B cell (primary cell): ENCODE measurements at regions of chr4 and their contacts with region 1.

Region 1: DNA sequence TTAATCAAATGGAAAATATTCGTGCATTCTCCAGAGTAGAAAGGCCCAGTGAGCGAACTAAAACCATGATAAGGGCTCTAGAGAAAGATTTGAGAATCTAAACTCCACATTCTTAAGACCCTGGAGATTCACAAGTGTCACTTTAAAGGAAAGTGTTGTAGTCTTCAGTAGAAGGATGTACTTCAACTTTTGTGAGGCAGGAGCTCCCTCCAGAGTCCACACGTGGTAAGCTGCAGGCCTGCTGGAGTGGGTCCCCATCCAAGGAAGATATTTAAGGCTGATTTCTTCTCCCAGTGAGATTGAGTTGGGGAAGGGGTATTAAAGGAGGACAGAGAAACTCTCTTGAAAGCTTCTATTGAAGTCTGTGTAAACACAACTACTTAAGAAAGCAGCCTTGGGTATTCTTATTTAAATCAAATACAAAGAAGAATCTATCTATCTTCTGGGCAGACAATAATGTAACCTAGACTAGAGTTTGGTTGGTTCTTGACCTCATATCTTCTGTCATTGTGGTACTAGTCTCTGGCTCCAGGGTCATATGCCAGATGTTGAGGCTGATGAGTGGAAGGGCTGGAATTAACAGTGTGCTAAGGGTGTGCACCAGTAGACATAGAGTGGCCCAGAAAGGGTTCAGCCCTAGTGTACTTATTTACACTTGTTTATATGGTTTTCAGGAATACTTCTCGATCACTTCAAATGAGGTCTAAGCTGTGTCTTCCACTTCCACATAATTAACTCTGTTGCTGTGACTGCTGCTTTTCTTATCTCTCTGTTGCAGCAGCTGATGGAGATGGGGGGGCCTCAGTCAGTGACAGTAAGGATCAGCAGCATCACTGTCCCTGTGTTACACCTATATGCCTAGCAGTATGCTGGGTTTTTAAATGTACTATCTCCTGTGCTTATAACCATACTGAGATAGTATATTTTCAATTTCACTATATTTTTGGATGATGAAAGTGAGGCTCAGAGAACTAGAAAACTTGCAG is 76.1 kb downstream of the HMGB2 start:
- DNase-seq: peak; percentile 66
- ATAC-seq: peak; percentile 73
- H3K4me3 ChIP-seq: no peak overlapping the region
- H3K4me3 Mint-ChIP-seq: no peak overlapping the region
- H3K27ac ChIP-seq: no peak overlapping the region
- H3K27ac Mint-ChIP-seq: no peak overlapping the region
- H3K4me1 ChIP-seq: peaks cover 8 to 11% of the 10 kb centered on the region in 2 donors
- H3K4me1 Mint-ChIP-seq: peaks cover 33% of the 10 kb centered on the region
- H3K27me3 ChIP-seq: no peaks in the 10 kb centered on the region
- H3K27me3 Mint-ChIP-seq: no peaks in the 10 kb centered on the region
- CTCF ChIP-seq: peak; percentile 81

Region 2: GRCh38 chr4:172546782-172547181 is 711.2 kb before region 1 on chr4:
- CTCF ChIA-PET with region 1: no interaction called
- POLR2A ChIA-PET with region 1: no interaction called
- intact Hi-C with region 1: no loop called
- DNase-seq: no peak
- ATAC-seq: no peak
- H3K4me3 ChIP-seq: no peak overlapping the region
- H3K4me3 Mint-ChIP-seq: no peak overlapping the region
- H3K27ac ChIP-seq: no peak overlapping the region
- H3K27ac Mint-ChIP-seq: no peak overlapping the region
- H3K4me1 ChIP-seq: no peaks in the 10 kb centered on the region
- H3K4me1 Mint-ChIP-seq: no peaks in the 10 kb centered on the region
- H3K27me3 ChIP-seq: no peaks in the 10 kb centered on the region
- H3K27me3 Mint-ChIP-seq: no peaks in the 10 kb centered on the region
- CTCF ChIP-seq: no peak

Region 3: GRCh38 chr4:173005912-173006633 is 252.0 kb before region 1 on chr4:
- CTCF ChIA-PET with region 1: interaction called, 181 read pairs
- POLR2A ChIA-PET with region 1: no interaction called
- intact Hi-C with region 1: no loop called
- DNase-seq: no peak
- ATAC-seq: no peak
- H3K4me3 ChIP-seq: no peak overlapping the region
- H3K4me3 Mint-ChIP-seq: no peak overlapping the region
- H3K27ac ChIP-seq: no peak overlapping the region
- H3K27ac Mint-ChIP-seq: no peak overlapping the region
- H3K4me1 ChIP-seq: no peaks in the 10 kb centered on the region
- H3K4me1 Mint-ChIP-seq: no peaks in the 10 kb centered on the region
- H3K27me3 ChIP-seq: no peaks in the 10 kb centered on the region
- H3K27me3 Mint-ChIP-seq: no peaks in the 10 kb centered on the region
- CTCF ChIP-seq: no peak

Region 4: GRCh38 chr4:173025131-173025530 is 232.9 kb before region 1 on chr4:
- CTCF ChIA-PET with region 1: interaction called, 68 read pairs
- POLR2A ChIA-PET with region 1: no interaction called
- intact Hi-C with region 1: loop called (anchors 1 kb)
- DNase-seq: peak; percentile 51
- ATAC-seq: peak; percentile 31
- H3K4me3 ChIP-seq: no peak overlapping the region
- H3K4me3 Mint-ChIP-seq: no peak overlapping the region
- H3K27ac ChIP-seq: no peak overlapping the region
- H3K27ac Mint-ChIP-seq: no peak overlapping the region
- H3K4me1 ChIP-seq: no peaks in the 10 kb centered on the region
- H3K4me1 Mint-ChIP-seq: no peaks in the 10 kb centered on the region
- H3K27me3 ChIP-seq: no peaks in the 10 kb centered on the region
- H3K27me3 Mint-ChIP-seq: peaks cover 2% of the 10 kb centered on the region
- CTCF ChIP-seq: peak; percentile 64

Region 5: GRCh38 chr4:173168396-173169177 is 89.4 kb before region 1 on chr4 and contains the start of gene GALNT7:
- CTCF ChIA-PET with region 1: interaction called, 3 read pairs
- POLR2A ChIA-PET with region 1: no interaction called
- intact Hi-C with region 1: loop called (anchors 5 kb)
- DNase-seq: peak; percentile 75
- ATAC-seq: peak; percentile 43
- H3K4me3 ChIP-seq: peak within 1 kb of the TSS; percentile 71 to 93 (median 74)
- H3K4me3 Mint-ChIP-seq: peak within 1 kb of the TSS; percentile 97
- H3K27ac ChIP-seq: peak within 1 kb of the TSS; percentile 65 to 85
- H3K27ac Mint-ChIP-seq: peak within 1 kb of the TSS; percentile 95
- H3K4me1 ChIP-seq: peaks cover 26 to 34% of the 10 kb centered on the region in 2 donors
- H3K4me1 Mint-ChIP-seq: peaks cover 40% of the 10 kb centered on the region
- H3K27me3 ChIP-seq: no peaks in the 10 kb centered on the region
- H3K27me3 Mint-ChIP-seq: no peaks in the 10 kb centered on the region
- CTCF ChIP-seq: no peak
- total RNA-seq, gene GALNT7: 23.7 and 26.8 TPM in 2 replicates

Region 6: GRCh38 chr4:173192375-173193162 is 65.5 kb before region 1 on chr4:
- CTCF ChIA-PET with region 1: interaction called, 12 read pairs
- POLR2A ChIA-PET with region 1: no interaction called
- intact Hi-C with region 1: loop called (anchors 10 kb)
- DNase-seq: peak; percentile 21
- ATAC-seq: no peak
- H3K4me3 ChIP-seq: no peak overlapping the region
- H3K4me3 Mint-ChIP-seq: no peak overlapping the region
- H3K27ac ChIP-seq: no peak overlapping the region
- H3K27ac Mint-ChIP-seq: no peak overlapping the region
- H3K4me1 ChIP-seq: peaks cover 10 to 11% of the 10 kb centered on the region in 2 donors
- H3K4me1 Mint-ChIP-seq: peaks cover 51% of the 10 kb centered on the region
- H3K27me3 ChIP-seq: no peaks in the 10 kb centered on the region
- H3K27me3 Mint-ChIP-seq: no peaks in the 10 kb centered on the region
- CTCF ChIP-seq: peak; percentile 3